ENCODE measurements at regions of chr17 and their contacts with region 1.

Region 1: GRCh38 chr17:75059369-75060345 is 12.6 kb downstream of the KCTD2 start:
- DNase-seq: peak; percentile 51 to 58 (median 56)
- H3K4me3 ChIP-seq: no peak overlapping the region
- H3K27ac ChIP-seq: peak overlapping the region in 1 of 2 donors; percentile 78
- H3K4me1 ChIP-seq: peaks cover 2% of the 10 kb centered on the region
- H3K27me3 ChIP-seq: no peaks in the 10 kb centered on the region
- CTCF ChIP-seq: peak in 2 of 3 donors; percentile 47 to 53
- EP300 ChIP-seq: no peak
- POLR2A ChIP-seq: no peak

Region 2: DNA sequence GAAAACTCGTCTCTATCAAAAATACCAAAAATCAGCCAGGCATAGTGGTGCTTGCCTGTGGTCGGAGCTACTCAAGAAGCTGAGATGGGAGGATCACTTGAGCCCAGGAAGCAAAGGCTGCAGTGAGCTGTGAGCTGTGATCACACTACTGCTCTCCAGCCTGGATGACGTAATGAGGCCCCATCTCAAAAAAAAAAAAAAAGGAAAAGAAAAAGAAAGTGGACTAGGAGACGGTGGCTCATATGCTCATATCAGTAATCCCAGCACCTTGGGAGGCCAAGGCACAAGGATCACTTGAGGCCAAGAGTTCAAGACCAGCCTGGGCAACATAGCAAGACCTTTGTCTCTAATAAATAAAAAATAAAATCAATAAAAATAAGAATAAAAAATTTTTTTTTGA is 131.9 kb after region 1 on chr17:
- intact Hi-C with region 1: loop called in 1 of 4 experiments (anchors 10 kb)
- DNase-seq: no peak
- H3K4me3 ChIP-seq: no peak overlapping the region
- H3K27ac ChIP-seq: no peak overlapping the region
- H3K4me1 ChIP-seq: no peaks in the 10 kb centered on the region
- H3K27me3 ChIP-seq: no peaks in the 10 kb centered on the region
- CTCF ChIP-seq: no peak
- EP300 ChIP-seq: no peak
- POLR2A ChIP-seq: no peak

Region 3: DNA sequence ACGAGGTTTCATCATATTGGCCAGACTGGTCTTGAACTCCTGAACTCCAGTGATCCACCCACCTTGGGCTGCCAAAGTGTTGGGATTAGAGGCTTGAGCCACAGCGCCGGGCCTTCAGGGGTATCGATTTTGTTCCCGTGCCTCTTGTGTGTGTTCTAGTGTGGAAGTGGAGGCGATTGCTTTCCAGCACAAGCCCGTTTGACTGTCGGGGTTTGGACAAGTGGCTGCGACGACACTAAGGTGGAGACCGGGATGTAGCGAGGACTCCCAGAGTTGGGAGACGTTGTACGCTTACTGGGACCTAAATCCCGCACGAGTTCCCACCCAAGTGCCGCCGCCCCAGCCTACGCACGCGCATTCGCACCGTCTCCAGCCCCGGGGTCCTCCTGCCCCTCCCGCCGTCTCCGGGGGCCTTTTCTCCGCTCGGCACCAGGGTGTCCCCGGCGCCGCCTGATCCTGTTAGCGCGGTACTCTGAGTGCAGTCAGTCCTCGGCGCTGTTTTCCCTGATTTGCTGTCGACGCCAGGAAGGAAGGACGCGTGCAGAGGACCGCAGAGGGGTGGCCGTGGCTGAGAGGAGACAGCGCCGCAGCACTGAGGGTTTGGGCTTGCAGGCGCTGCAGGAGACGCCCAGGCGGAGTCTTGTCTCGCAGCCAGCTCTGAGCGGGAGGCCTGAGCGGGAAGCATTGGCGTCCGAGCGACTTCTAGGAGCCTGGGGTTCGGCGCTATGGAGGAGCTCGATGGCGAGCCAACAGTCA is 145.6 kb after region 1 on chr17 and contains the start of gene NUP85:
- intact Hi-C with region 1: loop called in 1 of 4 experiments (anchors 10 kb)
- DNase-seq: peak; percentile 94 to 96 (median 95)
- H3K4me3 ChIP-seq: peak within 1 kb of the TSS; percentile 87
- H3K27ac ChIP-seq: peak within 1 kb of the TSS; percentile 76 to 95
- H3K4me1 ChIP-seq: peaks cover 4% of the 10 kb centered on the region
- H3K27me3 ChIP-seq: no peaks in the 10 kb centered on the region
- CTCF ChIP-seq: peak in 1 of 3 donors; percentile 28
- EP300 ChIP-seq: no peak
- POLR2A ChIP-seq: peak; percentile 83
- total RNA-seq, gene NUP85: 23.4 to 82.2 (median 55.1) TPM

Region 4: DNA sequence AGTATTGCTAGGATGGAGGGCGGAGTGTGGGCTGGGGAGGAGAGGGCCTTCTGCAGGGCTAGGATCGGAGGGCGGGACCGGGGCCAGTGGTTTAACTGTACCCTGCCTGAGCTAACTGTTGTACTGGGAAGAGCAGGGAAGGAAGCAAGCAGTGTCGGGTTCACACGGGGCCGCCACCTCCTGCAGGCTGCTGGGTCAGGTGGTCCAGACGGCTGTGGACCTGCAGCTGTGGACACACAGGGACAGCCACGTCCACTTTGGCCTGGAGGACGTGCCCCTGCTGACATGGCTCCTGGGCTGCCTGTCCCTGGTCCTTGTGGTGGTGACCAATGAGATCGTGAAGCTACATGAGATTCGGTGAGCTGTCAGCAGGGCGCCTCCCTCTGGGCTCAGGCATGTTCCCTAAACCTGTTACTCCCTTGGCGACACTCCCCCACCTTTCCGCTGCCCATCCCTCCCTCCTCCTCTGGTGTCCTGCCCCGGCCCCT is 439.1 kb after region 1 on chr17:
- intact Hi-C with region 1: no loop called
- DNase-seq: peak in 3 of 5 donors; percentile 52 to 56 (median 54)
- H3K4me3 ChIP-seq: no peak overlapping the region
- H3K27ac ChIP-seq: peak overlapping the region in 1 of 2 donors; percentile 66
- H3K4me1 ChIP-seq: peaks cover 3% of the 10 kb centered on the region
- H3K27me3 ChIP-seq: no peaks in the 10 kb centered on the region
- CTCF ChIP-seq: no peak
- EP300 ChIP-seq: no peak
- POLR2A ChIP-seq: no peak